T-cell (primary cell): ENCODE measurements at regions of chr10 and their contacts with region 1.

Region 1: GRCh38 chr10:71319042-71319799 is at the start of gene SLC29A3:
- DNase-seq: peak; percentile 59 to 90 (median 77)
- ATAC-seq: peak; percentile 90 to 92 (median 91)
- H3K4me3 ChIP-seq: peak within 1 kb of the TSS; percentile 68 to 82
- H3K4me3 Mint-ChIP-seq: peak within 1 kb of the TSS; percentile 94 to 96 (median 95)
- H3K27ac ChIP-seq: peak within 1 kb of the TSS; percentile 54
- H3K27ac Mint-ChIP-seq: peak within 1 kb of the TSS; percentile 86
- H3K4me1 ChIP-seq: peaks cover 0 to 24% of the 10 kb centered on the region in 2 experiments
- H3K4me1 Mint-ChIP-seq: peaks cover 34 to 39% (median 36%) of the 10 kb centered on the region in 3 donors
- H3K27me3 ChIP-seq: no peaks in the 10 kb centered on the region
- H3K27me3 Mint-ChIP-seq: no peaks in the 10 kb centered on the region
- total RNA-seq, gene SLC29A3: 3.3 to 8.8 (median 6.5) TPM

Region 2: GRCh38 chr10:70212879-70213278 is 1106.3 kb before region 1 on chr10:
- CTCF ChIA-PET with region 1: no interaction called
- POLR2A ChIA-PET with region 1: interaction called in 1 of 2 experiments, 17 read pairs
- DNase-seq: no peak
- ATAC-seq: no peak
- H3K4me3 ChIP-seq: no peak overlapping the region
- H3K4me3 Mint-ChIP-seq: no peak overlapping the region
- H3K27ac ChIP-seq: no peak overlapping the region
- H3K27ac Mint-ChIP-seq: no peak overlapping the region
- H3K4me1 ChIP-seq: no peaks in the 10 kb centered on the region
- H3K4me1 Mint-ChIP-seq: no peaks in the 10 kb centered on the region
- H3K27me3 ChIP-seq: no peaks in the 10 kb centered on the region
- H3K27me3 Mint-ChIP-seq: no peaks in the 10 kb centered on the region

Region 3: GRCh38 chr10:70493660-70494234 is 825.5 kb before region 1 on chr10:
- CTCF ChIA-PET with region 1: no interaction called
- POLR2A ChIA-PET with region 1: no interaction called
- DNase-seq: no peak
- ATAC-seq: no peak
- H3K4me3 ChIP-seq: no peak overlapping the region
- H3K4me3 Mint-ChIP-seq: no peak overlapping the region
- H3K27ac ChIP-seq: no peak overlapping the region
- H3K27ac Mint-ChIP-seq: no peak overlapping the region
- H3K4me1 ChIP-seq: peaks cover 10 to 14% of the 10 kb centered on the region in 2 experiments
- H3K4me1 Mint-ChIP-seq: peaks cover 19 to 28% (median 23%) of the 10 kb centered on the region in 3 donors
- H3K27me3 ChIP-seq: peaks cover 0 to 24% of the 10 kb centered on the region in 2 experiments
- H3K27me3 Mint-ChIP-seq: peaks cover 0 to 6% of the 10 kb centered on the region in 2 donors

Region 4: GRCh38 chr10:72379062-72379461 is 1059.8 kb after region 1 on chr10:
- CTCF ChIA-PET with region 1: no interaction called
- POLR2A ChIA-PET with region 1: no interaction called
- DNase-seq: no peak
- ATAC-seq: no peak
- H3K4me3 ChIP-seq: no peak overlapping the region
- H3K4me3 Mint-ChIP-seq: no peak overlapping the region
- H3K27ac ChIP-seq: no peak overlapping the region
- H3K27ac Mint-ChIP-seq: no peak overlapping the region
- H3K4me1 ChIP-seq: no peaks in the 10 kb centered on the region
- H3K4me1 Mint-ChIP-seq: no peaks in the 10 kb centered on the region
- H3K27me3 ChIP-seq: no peaks in the 10 kb centered on the region
- H3K27me3 Mint-ChIP-seq: no peaks in the 10 kb centered on the region

Region 5: DNA sequence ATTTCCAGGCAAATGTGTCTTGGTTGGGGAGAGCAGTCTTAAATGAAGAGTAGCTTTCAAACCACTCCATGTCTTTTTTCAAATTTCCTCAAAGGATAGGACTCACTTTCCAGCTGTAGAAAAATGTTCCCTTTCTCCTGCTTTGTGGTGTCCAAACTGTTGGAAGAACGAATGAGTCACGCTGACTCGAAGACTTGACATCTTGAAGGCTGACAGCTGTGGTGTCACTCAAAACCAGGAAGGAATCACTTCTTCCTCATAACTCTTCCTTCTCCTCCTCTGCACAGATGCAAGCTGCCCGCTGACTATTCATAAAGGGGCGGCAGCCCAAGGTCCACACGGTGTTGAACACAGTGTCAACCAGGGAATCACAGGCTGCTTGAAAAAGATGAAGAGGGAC is 1616.1 kb after region 1 on chr10:
- CTCF ChIA-PET with region 1: no interaction called
- POLR2A ChIA-PET with region 1: no interaction called
- DNase-seq: no peak
- ATAC-seq: no peak
- H3K4me3 ChIP-seq: no peak overlapping the region
- H3K4me3 Mint-ChIP-seq: no peak overlapping the region
- H3K27ac ChIP-seq: no peak overlapping the region
- H3K27ac Mint-ChIP-seq: no peak overlapping the region
- H3K4me1 ChIP-seq: no peaks in the 10 kb centered on the region
- H3K4me1 Mint-ChIP-seq: no peaks in the 10 kb centered on the region
- H3K27me3 ChIP-seq: no peaks in the 10 kb centered on the region
- H3K27me3 Mint-ChIP-seq: peaks cover 0 to 8% of the 10 kb centered on the region in 2 donors